Endothelial cell of umbilical vein (primary cell): ENCODE measurements at regions of chr13 and their contacts with region 1.

Region 1: GRCh38 chr13:80363890-80364503 is 23.1 kb upstream of the SPRY2 start:
- DNase-seq: peak; percentile 46
- H3K4me3 ChIP-seq: peak overlapping the region in 1 of 3 experiments; percentile 34
- H3K27ac ChIP-seq: no peak overlapping the region
- H3K4me1 ChIP-seq: peaks cover 5% of the 10 kb centered on the region
- H3K27me3 ChIP-seq: no peaks in the 10 kb centered on the region
- CTCF ChIP-seq: peak; percentile 62 to 65
- POLR2A ChIP-seq: no peak

Region 2: GRCh38 chr13:79548902-79549301 is 815.1 kb before region 1 on chr13:
- CTCF ChIA-PET with region 1: interaction called, 3 read pairs
- POLR2A ChIA-PET with region 1: no interaction called
- dilution Hi-C with region 1: no loop called
- intact Hi-C with region 1: loop called (anchors 1 kb)
- DNase-seq: peak; percentile 50
- H3K4me3 ChIP-seq: no peak overlapping the region
- H3K27ac ChIP-seq: no peak overlapping the region
- H3K4me1 ChIP-seq: no peaks in the 10 kb centered on the region
- H3K27me3 ChIP-seq: no peaks in the 10 kb centered on the region
- CTCF ChIP-seq: no peak
- POLR2A ChIP-seq: no peak

Region 3: DNA sequence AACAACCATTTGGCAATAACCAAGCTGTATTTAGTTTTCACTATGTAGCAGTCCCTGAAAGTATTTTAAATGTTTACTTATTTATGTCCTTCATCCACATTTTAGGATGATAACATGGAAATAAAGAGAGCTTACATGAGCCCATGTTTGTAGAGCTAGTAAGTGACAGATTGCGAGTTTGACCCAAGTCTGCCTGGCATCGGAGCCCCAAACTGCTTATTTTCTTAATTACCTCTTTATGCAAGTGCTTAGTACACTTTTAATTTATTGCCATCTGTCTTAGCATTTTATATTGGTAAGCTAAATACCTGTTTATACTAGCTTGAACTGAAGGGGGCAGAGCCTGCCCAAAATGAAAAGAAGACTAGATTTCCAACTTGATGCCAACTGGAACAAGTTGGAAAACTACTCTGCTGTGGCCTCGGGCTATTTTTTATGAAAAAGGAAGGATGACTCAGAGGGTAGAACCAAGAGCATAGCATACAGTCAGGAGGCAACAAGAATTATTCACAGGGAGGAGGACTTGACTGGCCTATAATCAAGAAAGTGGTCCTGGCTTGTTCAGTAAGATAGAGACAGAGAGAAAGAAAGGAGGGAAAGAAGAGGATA is 732.8 kb before region 1 on chr13:
- CTCF ChIA-PET with region 1: no interaction called
- POLR2A ChIA-PET with region 1: no interaction called
- dilution Hi-C with region 1: no loop called
- intact Hi-C with region 1: loop called (anchors 5 kb)
- DNase-seq: peak; percentile 93
- H3K4me3 ChIP-seq: no peak overlapping the region
- H3K27ac ChIP-seq: no peak overlapping the region
- H3K4me1 ChIP-seq: no peaks in the 10 kb centered on the region
- H3K27me3 ChIP-seq: no peaks in the 10 kb centered on the region
- CTCF ChIP-seq: peak in 1 of 2 donors; percentile 27
- POLR2A ChIP-seq: no peak

Region 4: GRCh38 chr13:80551650-80552497 is 187.9 kb after region 1 on chr13:
- CTCF ChIA-PET with region 1: interaction called, 3 read pairs
- POLR2A ChIA-PET with region 1: no interaction called
- dilution Hi-C with region 1: no loop called
- intact Hi-C with region 1: loop called (anchors 5 kb)
- DNase-seq: peak; percentile 88
- H3K4me3 ChIP-seq: no peak overlapping the region
- H3K27ac ChIP-seq: no peak overlapping the region
- H3K4me1 ChIP-seq: peaks cover 46% of the 10 kb centered on the region
- H3K27me3 ChIP-seq: no peaks in the 10 kb centered on the region
- CTCF ChIP-seq: no peak
- POLR2A ChIP-seq: no peak

Region 5: DNA sequence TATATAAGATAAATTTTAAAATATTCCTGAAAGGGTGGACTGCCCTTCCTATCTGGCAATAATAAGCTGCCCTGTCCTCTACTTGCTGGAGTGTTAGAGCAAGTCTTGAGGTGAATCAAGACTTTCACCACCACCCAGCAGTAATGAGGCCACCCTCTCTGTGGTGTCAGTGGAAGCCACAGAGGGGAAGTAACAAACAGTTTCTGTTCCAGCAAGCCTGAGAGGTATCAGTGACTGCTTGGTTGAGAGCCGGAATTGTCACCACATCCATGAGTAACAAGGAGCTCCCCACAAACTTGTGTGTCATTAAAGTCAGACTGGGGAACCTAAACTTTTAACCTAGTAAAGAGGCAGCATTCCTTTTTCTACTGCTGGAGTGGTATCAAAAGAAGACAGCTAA is 509.6 kb after region 1 on chr13:
- CTCF ChIA-PET with region 1: interaction called, 3 read pairs
- POLR2A ChIA-PET with region 1: no interaction called
- dilution Hi-C with region 1: no loop called
- intact Hi-C with region 1: loop called (anchors 5 kb)
- DNase-seq: no peak
- H3K4me3 ChIP-seq: no peak overlapping the region
- H3K27ac ChIP-seq: no peak overlapping the region
- H3K4me1 ChIP-seq: peaks cover 9% of the 10 kb centered on the region
- H3K27me3 ChIP-seq: no peaks in the 10 kb centered on the region
- CTCF ChIP-seq: no peak
- POLR2A ChIP-seq: no peak

Region 6: GRCh38 chr13:81017513-81018152 is 653.6 kb after region 1 on chr13:
- CTCF ChIA-PET with region 1: interaction called, 9 read pairs
- POLR2A ChIA-PET with region 1: no interaction called
- dilution Hi-C with region 1: no loop called
- intact Hi-C with region 1: loop called (anchors 1 kb)
- DNase-seq: peak; percentile 57
- H3K4me3 ChIP-seq: no peak overlapping the region
- H3K27ac ChIP-seq: no peak overlapping the region
- H3K4me1 ChIP-seq: peaks cover 2% of the 10 kb centered on the region
- H3K27me3 ChIP-seq: no peaks in the 10 kb centered on the region
- CTCF ChIP-seq: peak; percentile 19 to 29
- POLR2A ChIP-seq: no peak